ENCODE measurements at regions of chr10 and their contacts with region 1.

Region 1: DNA sequence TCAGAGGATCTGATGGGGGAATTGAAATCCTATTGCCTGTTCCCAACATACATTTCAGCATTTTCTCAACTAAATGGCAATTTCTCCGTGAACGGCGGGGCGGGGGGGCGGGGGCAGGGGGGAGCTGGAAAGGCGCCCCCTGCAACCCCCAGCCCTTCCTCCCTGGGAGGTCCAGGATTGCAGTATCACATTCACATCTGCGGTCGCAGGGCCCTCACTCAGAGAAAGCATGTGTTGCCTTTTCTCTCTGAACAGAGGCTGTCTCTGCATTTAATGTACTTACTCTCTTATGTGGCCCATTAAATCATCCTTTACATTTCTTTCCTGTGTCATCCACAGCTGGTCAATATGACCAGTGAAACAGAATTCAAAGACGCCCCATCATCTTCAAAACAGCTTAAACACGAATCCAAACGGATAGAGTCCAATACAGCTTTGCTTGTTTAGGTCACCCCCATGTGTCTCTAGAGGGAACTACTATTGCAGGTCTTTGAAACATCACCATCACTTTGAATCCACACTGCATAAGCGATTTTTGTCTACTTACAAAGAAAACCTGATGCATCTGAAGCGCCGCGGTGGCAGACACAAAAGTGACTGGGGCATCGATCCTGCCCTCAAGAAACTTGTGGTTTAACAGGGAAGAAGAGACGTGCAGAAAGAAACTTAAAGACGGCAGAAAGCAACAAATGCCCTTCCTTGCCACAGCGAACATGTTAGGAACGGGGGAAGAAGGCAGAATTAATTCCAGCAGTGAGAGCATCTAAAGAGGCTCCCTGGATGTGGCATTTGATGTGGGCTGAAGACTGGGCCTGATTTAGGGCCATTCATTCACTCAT is 17.0 kb upstream of the ECHDC3 start:
- DNase-seq: peak; percentile 26
- H3K4me3 Mint-ChIP-seq: no peak overlapping the region
- H3K27ac Mint-ChIP-seq: no peak overlapping the region
- H3K4me1 Mint-ChIP-seq: peaks cover 5% of the 10 kb centered on the region
- H3K27me3 Mint-ChIP-seq: peaks cover 2% of the 10 kb centered on the region

Region 2: GRCh38 chr10:11698691-11699549 is 26.2 kb before region 1 on chr10:
- CTCF ChIA-PET with region 1: interaction called, 4 read pairs
- intact Hi-C with region 1: loop called (anchors 1 kb)
- DNase-seq: no peak
- H3K4me3 Mint-ChIP-seq: no peak overlapping the region
- H3K27ac Mint-ChIP-seq: no peak overlapping the region
- H3K4me1 Mint-ChIP-seq: peaks cover 4% of the 10 kb centered on the region
- H3K27me3 Mint-ChIP-seq: no peaks in the 10 kb centered on the region